Left ventricle myocardium superior (tissue), 1 donor: ENCODE measurements at regions of chr4 and their contacts with region 1.

Region 1: DNA sequence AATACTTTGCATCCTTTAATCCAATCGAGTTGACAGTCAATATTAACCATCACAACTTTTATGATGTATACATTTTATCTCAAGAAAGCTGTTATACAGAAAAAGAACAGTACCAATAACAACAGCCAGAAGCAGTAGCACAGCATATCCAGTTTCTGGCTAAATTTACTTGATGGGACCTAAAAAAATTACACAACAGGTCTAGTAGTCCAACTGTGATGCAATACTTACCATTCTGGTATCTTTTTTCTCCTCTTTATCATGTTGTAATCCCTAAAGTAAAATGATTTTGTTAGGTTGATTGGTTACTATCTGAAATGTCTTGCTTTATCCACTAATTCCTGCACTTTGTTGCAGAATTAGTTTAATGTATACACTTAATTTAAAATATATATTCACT is 1150.6 kb downstream of the FAT4 start:
- DNase-seq: no peak
- ATAC-seq: peak; percentile 41

Region 2: GRCh38 chr4:125979950-125980349 is 485.4 kb before region 1 on chr4:
- intact Hi-C with region 1: no loop called
- DNase-seq: no peak
- ATAC-seq: no peak

Region 3: GRCh38 chr4:126223784-126224407 is 241.4 kb before region 1 on chr4:
- intact Hi-C with region 1: no loop called
- DNase-seq: no peak
- ATAC-seq: no peak

Region 4: GRCh38 chr4:126405369-126405982 is 59.9 kb before region 1 on chr4:
- intact Hi-C with region 1: no loop called
- DNase-seq: no peak
- ATAC-seq: peak; percentile 38

Region 5: DNA sequence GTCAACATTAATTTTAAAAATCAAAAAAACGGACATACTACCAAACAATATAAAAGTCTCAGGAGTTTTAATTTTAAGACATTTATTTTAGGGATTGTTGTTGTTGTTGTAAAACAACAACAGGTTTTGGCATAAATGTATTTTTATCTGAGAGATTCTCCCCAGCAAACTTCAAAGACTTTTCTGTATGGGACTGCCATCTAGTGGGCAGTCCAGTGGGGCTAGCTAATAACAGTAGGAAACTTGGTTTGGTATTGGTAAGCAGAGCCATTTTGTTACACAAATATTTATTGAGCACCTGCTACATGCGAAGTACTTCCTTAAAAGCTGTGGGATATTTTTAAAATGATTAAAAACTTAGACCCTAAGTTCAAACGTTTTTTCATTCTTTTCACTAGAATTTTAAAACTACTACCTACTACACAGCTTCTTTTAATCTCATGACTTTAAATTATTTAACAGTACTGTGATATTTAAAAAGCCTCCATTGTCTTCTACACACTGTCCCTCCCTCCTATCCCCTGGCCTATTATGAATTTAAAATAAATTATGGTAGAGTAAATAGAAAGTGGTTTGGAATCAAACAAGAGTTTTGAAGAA is 139.0 kb after region 1 on chr4:
- intact Hi-C with region 1: loop called (anchors 10 kb)
- DNase-seq: no peak
- ATAC-seq: peak; percentile 26